ENCODE measurements at regions of chr9 and their contacts with region 1.

Region 1: DNA sequence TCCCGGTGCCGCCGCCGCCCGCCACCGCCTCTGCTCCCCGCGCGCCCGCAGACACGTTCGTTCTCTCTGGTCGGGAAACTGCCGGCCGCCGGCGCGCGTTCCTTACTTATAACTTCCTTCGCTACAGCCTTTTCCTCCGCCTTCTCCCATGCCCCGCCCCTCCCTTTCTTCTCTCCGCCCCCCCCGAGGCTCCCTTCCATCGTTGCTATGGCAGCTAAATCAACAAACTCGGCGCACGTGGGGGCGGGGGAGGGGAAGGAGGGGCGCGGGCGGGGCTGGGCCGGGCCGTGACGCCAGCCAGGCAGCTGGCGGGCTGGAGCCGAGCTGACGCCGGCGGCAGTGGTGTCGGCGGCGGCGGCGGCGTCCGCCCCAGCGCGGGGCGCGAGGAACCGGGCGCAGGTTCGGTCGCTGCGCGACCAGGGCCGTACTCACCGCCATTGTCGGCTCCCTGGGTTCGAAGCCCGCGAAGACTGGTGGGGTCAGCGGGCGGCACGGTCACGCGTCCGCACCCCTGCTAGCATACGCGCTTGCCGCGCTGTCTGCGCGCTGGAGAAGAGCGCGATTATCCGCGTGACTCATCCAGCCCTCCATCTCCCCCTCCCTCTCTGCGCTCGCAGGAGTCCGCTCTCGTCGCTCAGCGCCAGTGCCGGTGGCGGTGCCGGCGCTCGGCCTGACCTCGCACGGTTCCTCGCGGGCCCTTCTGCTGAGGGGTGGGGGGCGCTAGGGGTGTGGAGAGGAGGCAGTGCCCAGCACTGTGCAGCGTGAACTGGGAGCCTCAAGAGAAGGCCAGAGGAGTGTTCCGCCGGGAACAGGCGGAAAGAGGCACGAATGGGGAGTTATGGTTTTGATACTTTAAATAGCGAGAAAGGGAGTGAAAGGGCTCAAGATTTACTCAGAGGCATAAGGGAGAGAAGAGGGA is at the start of gene KLF4:
- DNase-seq: peak; percentile 90 to 92
- H3K4me3 ChIP-seq: peak within 1 kb of the TSS; percentile 75
- H3K4me3 Mint-ChIP-seq: peak within 1 kb of the TSS; percentile 79
- H3K27ac Mint-ChIP-seq: peak within 1 kb of the TSS; percentile 87
- H3K4me1 ChIP-seq: peaks cover 12% of the 10 kb centered on the region
- H3K4me1 Mint-ChIP-seq: peaks cover 7% of the 10 kb centered on the region
- H3K27me3 ChIP-seq: no peaks in the 10 kb centered on the region
- H3K27me3 Mint-ChIP-seq: peaks cover under 1% of the 10 kb centered on the region
- CTCF ChIP-seq: no peak
- total RNA-seq, gene KLF4: 4.9 and 7.2 TPM in 2 replicates

Region 2: DNA sequence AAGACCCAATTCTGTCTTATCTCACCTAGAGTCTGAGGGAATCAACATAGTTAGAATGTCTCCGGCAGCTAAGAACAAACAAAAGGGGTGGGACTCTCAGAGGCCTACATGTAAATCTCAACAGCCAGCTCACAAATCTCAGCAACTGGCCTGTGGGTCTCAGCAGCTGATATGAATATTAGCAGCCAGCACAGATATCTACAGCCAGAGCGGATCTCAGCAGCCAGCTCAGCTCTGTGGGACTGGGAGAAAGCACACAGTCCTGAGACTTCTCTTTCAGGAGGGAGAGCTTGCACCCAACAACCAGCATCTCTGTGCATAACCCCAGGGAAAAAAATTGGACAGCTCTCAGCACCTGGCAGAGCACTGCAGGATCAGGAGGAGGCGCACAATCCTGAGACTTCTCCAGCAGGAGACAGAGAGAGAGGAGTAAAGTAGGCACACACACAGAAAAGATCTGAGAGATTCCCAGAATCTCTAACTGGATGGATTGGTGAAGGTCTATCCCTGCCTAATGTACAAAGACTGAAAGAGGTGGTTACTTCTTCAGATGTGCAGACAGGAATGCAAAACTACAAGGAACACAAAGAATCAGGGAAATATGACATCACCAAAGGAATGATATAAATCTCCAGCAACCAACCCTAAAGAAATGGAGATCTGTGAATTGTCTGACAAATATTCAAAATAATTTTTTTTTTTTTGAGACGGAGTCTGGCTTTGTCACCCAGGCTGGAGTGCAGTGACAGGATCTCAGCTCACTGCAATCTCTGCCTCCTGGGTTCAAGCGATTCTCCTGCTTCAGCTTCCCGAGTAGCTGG is 29.5 kb before region 1 on chr9:
- CTCF ChIA-PET with region 1: no interaction called
- POLR2A ChIA-PET with region 1: interaction called, 5 read pairs
- intact Hi-C with region 1: loop called (anchors 2 kb)
- DNase-seq: peak; percentile 79 to 83
- H3K4me3 ChIP-seq: no peak overlapping the region
- H3K4me3 Mint-ChIP-seq: peak overlapping the region; percentile 12
- H3K27ac Mint-ChIP-seq: peak overlapping the region; percentile 70
- H3K4me1 ChIP-seq: peaks cover 30% of the 10 kb centered on the region
- H3K4me1 Mint-ChIP-seq: peaks cover 18% of the 10 kb centered on the region
- H3K27me3 ChIP-seq: no peaks in the 10 kb centered on the region
- H3K27me3 Mint-ChIP-seq: no peaks in the 10 kb centered on the region
- CTCF ChIP-seq: no peak

Region 3: DNA sequence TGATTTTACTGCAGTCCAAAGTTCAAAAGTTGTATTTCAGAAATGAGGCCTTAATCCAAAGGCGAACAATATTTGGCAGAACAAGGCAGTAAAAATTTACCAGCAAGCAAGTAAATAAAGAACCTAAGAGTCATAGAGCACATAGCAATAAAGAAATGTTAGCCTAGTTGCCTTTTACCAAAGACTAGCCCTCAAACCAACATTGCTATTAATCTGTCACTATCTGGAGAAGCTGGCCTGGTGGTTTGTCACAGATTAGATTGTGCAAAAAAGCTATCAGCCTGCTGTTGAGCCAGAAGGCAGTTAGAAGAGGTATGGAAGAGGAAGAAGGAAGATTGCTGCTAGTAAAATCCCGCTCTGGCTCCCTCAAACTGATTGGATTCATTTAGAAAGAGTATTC is 304.3 kb after region 1 on chr9:
- CTCF ChIA-PET with region 1: no interaction called
- POLR2A ChIA-PET with region 1: no interaction called
- intact Hi-C with region 1: loop called (anchors 5 kb)
- DNase-seq: peak; percentile 49 to 60
- H3K4me3 ChIP-seq: no peak overlapping the region
- H3K4me3 Mint-ChIP-seq: no peak overlapping the region
- H3K27ac Mint-ChIP-seq: no peak overlapping the region
- H3K4me1 ChIP-seq: peaks cover 40% of the 10 kb centered on the region
- H3K4me1 Mint-ChIP-seq: peaks cover 21% of the 10 kb centered on the region
- H3K27me3 ChIP-seq: no peaks in the 10 kb centered on the region
- H3K27me3 Mint-ChIP-seq: no peaks in the 10 kb centered on the region
- CTCF ChIP-seq: no peak

Region 4: DNA sequence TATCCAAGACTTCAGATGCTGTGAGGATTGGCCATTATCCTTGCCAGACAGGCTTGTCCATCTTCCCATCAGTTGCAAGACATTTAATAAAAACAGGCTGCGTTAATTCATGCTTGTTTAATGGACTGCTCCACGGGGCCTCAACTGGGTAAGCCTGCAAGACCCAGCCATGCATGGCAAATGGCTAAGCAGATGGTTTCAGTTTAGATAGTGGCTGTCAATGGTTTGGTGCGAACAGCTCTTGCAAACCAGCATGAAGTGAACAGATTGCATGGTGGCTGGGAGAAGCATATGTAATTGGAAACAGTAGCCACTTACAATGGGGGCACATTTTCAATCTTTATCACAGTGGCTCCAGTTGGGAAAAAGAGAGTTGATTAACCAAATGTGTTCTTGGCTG is 627.8 kb after region 1 on chr9:
- CTCF ChIA-PET with region 1: no interaction called
- POLR2A ChIA-PET with region 1: no interaction called
- intact Hi-C with region 1: loop called (anchors 10 kb)
- DNase-seq: no peak
- H3K4me3 ChIP-seq: no peak overlapping the region
- H3K4me3 Mint-ChIP-seq: no peak overlapping the region
- H3K27ac Mint-ChIP-seq: no peak overlapping the region
- H3K4me1 ChIP-seq: peaks cover 7% of the 10 kb centered on the region
- H3K4me1 Mint-ChIP-seq: peaks cover 5% of the 10 kb centered on the region
- H3K27me3 ChIP-seq: no peaks in the 10 kb centered on the region
- H3K27me3 Mint-ChIP-seq: no peaks in the 10 kb centered on the region
- CTCF ChIP-seq: no peak

Region 5: GRCh38 chr9:108182950-108183381 is 693.0 kb after region 1 on chr9:
- CTCF ChIA-PET with region 1: no interaction called
- POLR2A ChIA-PET with region 1: no interaction called
- intact Hi-C with region 1: no loop called
- DNase-seq: no peak
- H3K4me3 ChIP-seq: no peak overlapping the region
- H3K4me3 Mint-ChIP-seq: no peak overlapping the region
- H3K27ac Mint-ChIP-seq: no peak overlapping the region
- H3K4me1 ChIP-seq: peaks cover 12% of the 10 kb centered on the region
- H3K4me1 Mint-ChIP-seq: no peaks in the 10 kb centered on the region
- H3K27me3 ChIP-seq: no peaks in the 10 kb centered on the region
- H3K27me3 Mint-ChIP-seq: no peaks in the 10 kb centered on the region
- CTCF ChIP-seq: no peak

Region 6: GRCh38 chr9:108761655-108762347 is 1271.9 kb after region 1 on chr9:
- CTCF ChIA-PET with region 1: no interaction called
- POLR2A ChIA-PET with region 1: no interaction called
- intact Hi-C with region 1: loop called (anchors 10 kb)
- DNase-seq: peak; percentile 48 to 57
- H3K4me3 ChIP-seq: no peak overlapping the region
- H3K4me3 Mint-ChIP-seq: no peak overlapping the region
- H3K27ac Mint-ChIP-seq: no peak overlapping the region
- H3K4me1 ChIP-seq: no peaks in the 10 kb centered on the region
- H3K4me1 Mint-ChIP-seq: no peaks in the 10 kb centered on the region
- H3K27me3 ChIP-seq: no peaks in the 10 kb centered on the region
- H3K27me3 Mint-ChIP-seq: peaks cover 10% of the 10 kb centered on the region
- CTCF ChIP-seq: peak; percentile 63 to 90

Measured in Caco-2 (cell line).